ENCODE measurements at regions of chr3 and their contacts with region 1.

Region 1: DNA sequence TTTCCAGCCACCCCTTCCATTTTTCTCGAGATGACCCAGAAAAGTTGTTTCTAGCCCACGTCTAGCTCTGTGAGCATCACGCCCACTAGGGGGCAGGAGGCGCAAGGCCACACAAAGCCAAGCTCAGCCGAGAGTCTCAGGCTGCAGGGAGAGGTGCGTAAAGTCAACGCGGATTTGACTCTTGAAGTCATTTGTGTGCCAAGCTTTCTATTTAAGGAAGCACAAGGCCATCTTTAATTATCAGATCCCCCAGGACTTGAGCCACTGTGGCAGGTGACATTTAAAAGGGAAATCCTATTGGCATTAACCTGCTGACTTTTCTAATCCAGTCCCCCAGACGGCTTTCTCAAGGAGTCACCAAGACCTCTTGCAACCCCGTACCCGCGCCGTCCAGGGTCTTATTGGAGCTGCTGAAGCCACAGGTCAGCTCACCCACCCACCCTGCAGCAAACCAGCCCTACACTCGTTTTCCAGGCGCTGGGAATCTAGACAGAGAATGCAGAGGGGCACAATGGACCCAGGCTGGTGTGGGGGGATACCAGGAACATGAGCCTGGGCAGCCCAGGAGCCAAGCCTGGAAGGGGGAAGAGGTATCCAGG is 62.1 kb downstream of the CAPN7 start:
- DNase-seq: peak; percentile 84
- ATAC-seq: peak; percentile 87
- H3K4me3 Mint-ChIP-seq: no peak overlapping the region
- H3K27ac Mint-ChIP-seq: no peak overlapping the region
- H3K4me1 Mint-ChIP-seq: no peaks in the 10 kb centered on the region
- H3K27me3 Mint-ChIP-seq: no peaks in the 10 kb centered on the region; the same call in 1 of the 2 replicates
- CTCF ChIP-seq: peak; percentile 84

Region 2: DNA sequence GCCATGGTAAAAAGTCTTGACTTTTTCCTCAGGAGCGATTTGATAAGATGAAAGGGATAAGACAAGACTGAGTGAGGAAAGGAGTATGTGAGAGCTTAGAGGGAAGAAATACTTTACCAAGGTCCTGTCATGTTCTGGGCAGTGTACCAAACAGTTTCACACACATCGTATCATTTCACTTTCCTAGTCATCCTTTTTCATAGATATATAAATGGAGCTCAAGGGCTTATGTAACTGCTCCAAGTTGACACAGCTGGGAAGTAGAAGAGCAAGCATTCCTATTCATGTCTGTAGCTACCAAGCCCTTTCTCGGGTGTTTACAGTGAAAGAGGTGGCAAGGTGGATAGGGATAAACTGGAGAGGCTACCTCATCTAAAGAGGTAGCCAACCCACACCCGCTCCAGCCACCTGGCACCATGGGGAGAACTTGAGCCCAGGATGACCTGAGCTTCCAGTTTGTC is 260.4 kb before region 1 on chr3:
- CTCF ChIA-PET with region 1: no interaction called
- POLR2A ChIA-PET with region 1: no interaction called
- DNase-seq: no peak
- ATAC-seq: no peak
- H3K4me3 Mint-ChIP-seq: no peak overlapping the region
- H3K27ac Mint-ChIP-seq: no peak overlapping the region
- H3K4me1 Mint-ChIP-seq: peaks cover 4% of the 10 kb centered on the region
- H3K27me3 Mint-ChIP-seq: no peaks in the 10 kb centered on the region
- CTCF ChIP-seq: no peak

Region 3: GRCh38 chr3:15108082-15108545 is 160.0 kb before region 1 on chr3:
- CTCF ChIA-PET with region 1: interaction called, 17 read pairs
- POLR2A ChIA-PET with region 1: no interaction called
- DNase-seq: peak; percentile 85
- ATAC-seq: peak; percentile 92
- H3K4me3 Mint-ChIP-seq: no peak overlapping the region
- H3K27ac Mint-ChIP-seq: no peak overlapping the region
- H3K4me1 Mint-ChIP-seq: peaks cover 9% of the 10 kb centered on the region
- H3K27me3 Mint-ChIP-seq: no peaks in the 10 kb centered on the region
- CTCF ChIP-seq: peak; percentile 97

Region 4: DNA sequence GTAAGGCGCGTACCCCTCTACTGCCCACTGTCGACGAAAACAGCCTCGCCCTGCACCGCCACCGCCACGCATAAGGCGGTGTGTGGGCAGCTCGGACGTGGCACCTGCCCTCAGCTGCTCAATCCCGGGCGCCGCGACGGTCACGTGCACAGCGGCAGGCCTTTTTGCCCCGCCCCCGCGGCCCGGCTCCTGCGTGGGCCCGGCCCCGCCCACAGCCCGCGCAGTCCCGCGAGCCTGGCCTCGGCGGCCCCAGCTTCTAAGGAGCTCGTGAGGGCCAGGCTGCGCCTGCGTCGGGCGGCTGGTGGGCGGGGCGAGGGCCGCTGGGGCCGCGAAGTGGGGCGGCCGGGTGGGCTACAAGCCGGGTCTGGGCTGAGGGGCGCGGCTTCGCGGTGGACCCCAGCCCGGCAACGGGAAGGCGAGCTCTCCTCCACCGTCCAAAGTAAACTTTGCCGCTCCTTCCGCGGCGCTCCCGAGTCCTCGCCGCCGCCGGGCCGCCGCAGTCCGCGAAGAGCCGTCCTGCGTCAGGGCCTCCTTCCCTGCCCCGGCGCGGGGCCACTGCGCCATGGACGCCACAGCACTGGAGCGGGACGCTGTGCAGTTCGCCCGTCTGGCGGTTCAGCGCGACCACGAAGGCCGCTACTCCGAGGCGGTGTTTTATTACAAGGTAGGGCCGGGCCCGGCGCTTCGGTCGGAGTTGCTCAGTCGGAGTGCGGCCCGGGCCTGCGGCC is 62.0 kb before region 1 on chr3 and contains the start of gene CAPN7:
- CTCF ChIA-PET with region 1: interaction called, 16 read pairs
- POLR2A ChIA-PET with region 1: no interaction called
- DNase-seq: peak; percentile 80
- ATAC-seq: peak; percentile 81
- H3K4me3 Mint-ChIP-seq: peak within 1 kb of the TSS; percentile 82
- H3K27ac Mint-ChIP-seq: peak within 1 kb of the TSS; percentile 47
- H3K4me1 Mint-ChIP-seq: peaks cover 11% of the 10 kb centered on the region
- H3K27me3 Mint-ChIP-seq: no peaks in the 10 kb centered on the region
- CTCF ChIP-seq: no peak
- total RNA-seq, gene CAPN7: 16.8 to 20.3 TPM (median 17.9 TPM) in 3 replicates

Region 5: DNA sequence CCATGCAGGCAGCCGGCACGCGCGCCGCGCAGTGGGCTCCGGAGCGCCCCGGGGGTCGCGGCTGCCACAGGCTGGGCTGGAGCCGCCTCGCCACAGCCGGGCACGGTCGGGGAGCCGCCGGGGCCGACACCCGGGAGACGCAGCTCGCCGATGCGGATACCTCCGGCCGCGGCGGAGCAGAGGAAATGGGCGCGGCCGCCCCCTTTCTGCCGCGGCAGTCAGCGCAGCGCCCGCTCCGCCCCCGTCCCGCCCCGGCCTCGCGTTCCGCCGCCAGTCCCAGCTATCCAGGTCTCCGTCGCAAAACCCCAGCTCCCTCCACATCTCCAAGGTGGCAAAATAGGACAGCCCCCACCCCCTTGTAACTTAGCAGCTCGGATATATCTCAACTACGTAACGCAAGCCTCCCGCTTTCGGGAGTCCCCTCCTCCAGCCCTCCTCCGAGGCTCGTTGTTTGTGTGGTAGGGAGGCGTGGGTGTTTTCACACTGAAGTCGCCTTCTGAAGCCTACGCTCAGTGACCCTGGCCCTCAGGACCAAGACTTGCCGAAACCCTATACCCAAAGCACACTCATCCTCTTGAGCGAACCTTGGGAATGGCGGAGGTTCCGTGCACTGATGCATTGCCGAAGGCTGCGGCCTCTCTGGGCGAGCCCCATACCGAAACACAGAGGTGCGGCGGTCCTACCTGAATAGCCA is 64.4 kb after region 1 on chr3 and contains the start of gene SH3BP5:
- CTCF ChIA-PET with region 1: interaction called, 76 read pairs
- POLR2A ChIA-PET with region 1: no interaction called
- DNase-seq: peak; percentile 79
- ATAC-seq: peak; percentile 92
- H3K4me3 Mint-ChIP-seq: peak within 1 kb of the TSS; percentile 95
- H3K27ac Mint-ChIP-seq: peak within 1 kb of the TSS; percentile 87
- H3K4me1 Mint-ChIP-seq: peaks cover 33% of the 10 kb centered on the region
- H3K27me3 Mint-ChIP-seq: peaks cover 34% of the 10 kb centered on the region
- CTCF ChIP-seq: peak; percentile 51; the same call in 1 of the 2 replicates
- total RNA-seq, gene SH3BP5: 5.1 to 7.2 TPM (median 5.9 TPM) in 3 replicates

Region 6: GRCh38 chr3:15405448-15406050 is 137.4 kb after region 1 on chr3:
- CTCF ChIA-PET with region 1: interaction called, 76 read pairs
- POLR2A ChIA-PET with region 1: no interaction called
- DNase-seq: no peak
- ATAC-seq: peak; percentile 69
- H3K4me3 Mint-ChIP-seq: no peak overlapping the region
- H3K27ac Mint-ChIP-seq: no peak overlapping the region
- H3K4me1 Mint-ChIP-seq: no peaks in the 10 kb centered on the region
- H3K27me3 Mint-ChIP-seq: no peaks in the 10 kb centered on the region
- CTCF ChIP-seq: no peak

Measured in WTC11 (cell line).